H1 (cell line): ENCODE measurements at regions of chr3 and their contacts with region 1.

Region 1: GRCh38 chr3:172750368-172751174 is at the start of gene ECT2:
- DNase-seq: peak; percentile 96 to 100
- H3K4me3 ChIP-seq: peak within 1 kb of the TSS; percentile 81 to 94 (median 90)
- H3K27ac ChIP-seq: peak within 1 kb of the TSS; percentile 89
- H3K4me1 ChIP-seq: no peaks in the 10 kb centered on the region; a peak in 1 of 7 replicates
- H3K27me3 ChIP-seq: no peaks in the 10 kb centered on the region
- CTCF ChIP-seq: peak; percentile 57 to 80 (median 71)
- EP300 ChIP-seq: peak; percentile 4 to 32; a peak in 1 of 3 replicates
- POLR2A ChIP-seq: peak; percentile 95 to 97
- RAD21 ChIP-seq: peak; percentile 53 to 61
- total RNA-seq, gene ECT2: 76.2 and 88.7 TPM in 2 replicates

Region 2: GRCh38 chr3:172739462-172739861 is 11.1 kb before region 1 on chr3:
- CTCF ChIA-PET with region 1: interaction called, 7 read pairs
- POLR2A ChIA-PET with region 1: interaction called, 14 read pairs
- DNase-seq: no peak
- H3K4me3 ChIP-seq: no peak overlapping the region
- H3K27ac ChIP-seq: no peak overlapping the region
- H3K4me1 ChIP-seq: peaks cover 0 to 4% (median 0%) of the 10 kb centered on the region in 4 experiments; a peak in 2 of 7 replicates
- H3K27me3 ChIP-seq: no peaks in the 10 kb centered on the region
- CTCF ChIP-seq: no peak
- EP300 ChIP-seq: no peak
- POLR2A ChIP-seq: no peak
- RAD21 ChIP-seq: no peak

Region 3: DNA sequence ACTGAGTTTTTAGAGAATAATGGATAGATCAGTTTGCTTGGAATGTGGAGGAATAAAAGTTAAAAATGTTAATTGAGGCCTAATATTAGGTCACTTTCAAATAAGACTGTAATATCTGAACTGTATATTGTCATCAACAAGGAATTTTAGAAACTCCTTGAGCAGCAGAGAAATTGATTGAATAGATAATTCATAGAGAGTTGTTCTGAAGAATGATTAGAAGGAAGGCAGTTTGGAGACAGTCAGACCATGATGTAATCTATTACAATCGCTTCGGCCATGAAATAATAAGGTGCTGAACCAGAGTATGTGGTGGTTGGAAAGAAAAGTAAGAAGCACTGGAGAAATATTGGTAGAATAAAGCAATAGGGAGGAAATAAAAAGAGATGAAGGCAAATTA is 15.7 kb after region 1 on chr3:
- CTCF ChIA-PET with region 1: no interaction called
- POLR2A ChIA-PET with region 1: interaction called, 11 read pairs
- DNase-seq: no peak
- H3K4me3 ChIP-seq: no peak overlapping the region
- H3K27ac ChIP-seq: no peak overlapping the region
- H3K4me1 ChIP-seq: no peaks in the 10 kb centered on the region
- H3K27me3 ChIP-seq: no peaks in the 10 kb centered on the region
- CTCF ChIP-seq: no peak
- EP300 ChIP-seq: no peak
- POLR2A ChIP-seq: no peak
- RAD21 ChIP-seq: no peak

Region 4: DNA sequence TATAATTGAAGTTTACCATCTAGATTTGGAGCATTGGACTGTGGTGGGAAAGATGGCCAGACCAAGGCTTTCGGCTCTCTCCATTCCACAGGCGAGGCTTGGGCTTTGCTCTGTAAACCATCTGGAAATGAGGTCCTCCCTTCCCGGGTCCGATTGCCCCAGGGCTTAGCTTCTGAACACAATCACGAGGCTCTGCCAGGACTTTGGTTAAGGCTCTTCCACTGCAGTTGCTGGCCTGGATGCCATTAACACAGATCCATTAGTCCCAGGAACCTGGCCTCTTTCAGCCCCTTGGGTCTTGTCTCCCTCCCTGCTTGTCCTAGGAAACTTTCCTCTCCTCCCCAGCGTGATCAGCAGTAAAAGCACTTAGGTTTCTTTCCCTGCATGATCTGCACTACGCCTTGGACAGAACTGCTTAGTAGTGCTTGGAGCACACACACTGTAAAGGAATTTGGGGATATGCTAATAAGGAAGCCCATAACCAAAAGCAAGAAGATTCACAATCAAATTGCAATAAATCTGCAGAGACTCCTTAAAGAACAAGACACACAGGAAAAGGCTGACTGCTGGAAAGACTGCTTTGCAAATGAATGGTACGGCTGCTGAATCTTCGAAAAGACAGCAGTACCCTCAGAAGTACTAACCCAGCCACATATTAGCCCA is 154.3 kb after region 1 on chr3:
- CTCF ChIA-PET with region 1: no interaction called
- POLR2A ChIA-PET with region 1: no interaction called
- DNase-seq: peak in 1 of 2 experiments; percentile 48
- H3K4me3 ChIP-seq: no peak overlapping the region
- H3K27ac ChIP-seq: no peak overlapping the region
- H3K4me1 ChIP-seq: peaks cover 0 to 6% (median 4%) of the 10 kb centered on the region in 4 experiments; a peak in 6 of 7 replicates
- H3K27me3 ChIP-seq: no peaks in the 10 kb centered on the region
- CTCF ChIP-seq: no peak
- EP300 ChIP-seq: no peak
- POLR2A ChIP-seq: no peak
- RAD21 ChIP-seq: no peak